Activated CD4-positive, alpha-beta memory T cell treated with anti-CD3 and anti-CD28 coated beads for 36 hours (primary cell): ENCODE measurements at regions of chr15 and their contacts with region 1.

Region 1: GRCh38 chr15:70097337-70098169 is at the start of gene TLE3:
- DNase-seq: peak; percentile 99
- H3K4me3 Mint-ChIP-seq: peak within 1 kb of the TSS; percentile 88
- H3K27ac Mint-ChIP-seq: peak within 1 kb of the TSS; percentile 95
- H3K4me1 Mint-ChIP-seq: peaks cover 33% of the 10 kb centered on the region
- H3K27me3 Mint-ChIP-seq: no peaks in the 10 kb centered on the region
- total RNA-seq, gene TLE3: 85.4 to 95.1 TPM

Region 2: DNA sequence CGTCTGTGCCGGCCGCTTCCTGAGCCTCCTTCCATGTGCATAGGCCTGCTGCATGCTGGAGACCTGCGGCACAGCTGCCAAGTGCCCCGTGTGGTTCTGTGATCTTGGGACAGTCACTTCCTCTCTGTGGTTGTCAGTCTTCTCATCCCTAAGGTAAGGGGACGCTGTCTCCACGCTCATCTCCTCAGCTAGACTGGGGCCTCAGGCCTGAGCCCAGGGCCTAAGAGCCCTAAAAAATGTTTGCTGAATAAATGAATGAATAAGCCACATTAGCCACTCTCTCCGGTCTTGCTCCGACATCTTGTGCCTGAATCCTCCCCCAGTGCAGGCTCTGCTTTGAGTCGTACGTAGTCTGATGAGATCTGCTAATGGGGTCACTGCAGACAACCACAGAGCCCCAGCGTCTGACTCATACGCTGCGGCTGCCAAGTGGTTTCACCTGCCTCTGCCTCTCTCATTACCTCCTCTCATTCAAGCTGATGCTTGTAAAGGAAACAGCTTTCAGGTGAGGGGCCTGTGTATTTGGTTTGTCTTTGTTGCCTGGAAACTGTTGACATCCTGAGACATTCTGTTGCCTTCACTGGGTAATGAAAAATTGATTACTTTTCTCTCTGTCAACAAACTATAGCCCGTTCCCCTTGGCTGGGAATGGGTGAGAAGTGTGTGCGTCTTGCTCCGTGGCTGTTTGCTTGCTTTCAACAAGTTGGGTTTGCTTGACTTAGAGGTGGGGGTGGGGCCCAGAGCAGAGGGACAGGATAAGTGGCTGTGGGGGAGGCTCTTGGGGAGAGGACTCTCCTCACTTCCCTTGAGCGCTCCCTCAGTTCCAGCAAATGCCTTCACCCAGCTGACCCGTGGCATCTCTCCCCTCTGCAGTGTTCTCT is 629.1 kb before region 1 on chr15:
- CTCF ChIA-PET with region 1: interaction called, 4 read pairs
- POLR2A ChIA-PET with region 1: interaction called, 10 read pairs
- intact Hi-C with region 1: loop called (anchors 2 kb)
- DNase-seq: peak; percentile 92
- H3K4me3 Mint-ChIP-seq: peak overlapping the region; percentile 30
- H3K27ac Mint-ChIP-seq: peak overlapping the region; percentile 83
- H3K4me1 Mint-ChIP-seq: peaks cover 38% of the 10 kb centered on the region
- H3K27me3 Mint-ChIP-seq: no peaks in the 10 kb centered on the region

Region 3: GRCh38 chr15:69729161-69729748 is 368.3 kb before region 1 on chr15:
- CTCF ChIA-PET with region 1: interaction called, 3 read pairs
- POLR2A ChIA-PET with region 1: interaction called, 4 read pairs
- intact Hi-C with region 1: loop called (anchors 1 kb)
- DNase-seq: peak; percentile 82
- H3K4me3 Mint-ChIP-seq: peak overlapping the region; percentile 4
- H3K27ac Mint-ChIP-seq: no peak overlapping the region
- H3K4me1 Mint-ChIP-seq: peaks cover 26% of the 10 kb centered on the region
- H3K27me3 Mint-ChIP-seq: peaks cover 4% of the 10 kb centered on the region

Region 4: DNA sequence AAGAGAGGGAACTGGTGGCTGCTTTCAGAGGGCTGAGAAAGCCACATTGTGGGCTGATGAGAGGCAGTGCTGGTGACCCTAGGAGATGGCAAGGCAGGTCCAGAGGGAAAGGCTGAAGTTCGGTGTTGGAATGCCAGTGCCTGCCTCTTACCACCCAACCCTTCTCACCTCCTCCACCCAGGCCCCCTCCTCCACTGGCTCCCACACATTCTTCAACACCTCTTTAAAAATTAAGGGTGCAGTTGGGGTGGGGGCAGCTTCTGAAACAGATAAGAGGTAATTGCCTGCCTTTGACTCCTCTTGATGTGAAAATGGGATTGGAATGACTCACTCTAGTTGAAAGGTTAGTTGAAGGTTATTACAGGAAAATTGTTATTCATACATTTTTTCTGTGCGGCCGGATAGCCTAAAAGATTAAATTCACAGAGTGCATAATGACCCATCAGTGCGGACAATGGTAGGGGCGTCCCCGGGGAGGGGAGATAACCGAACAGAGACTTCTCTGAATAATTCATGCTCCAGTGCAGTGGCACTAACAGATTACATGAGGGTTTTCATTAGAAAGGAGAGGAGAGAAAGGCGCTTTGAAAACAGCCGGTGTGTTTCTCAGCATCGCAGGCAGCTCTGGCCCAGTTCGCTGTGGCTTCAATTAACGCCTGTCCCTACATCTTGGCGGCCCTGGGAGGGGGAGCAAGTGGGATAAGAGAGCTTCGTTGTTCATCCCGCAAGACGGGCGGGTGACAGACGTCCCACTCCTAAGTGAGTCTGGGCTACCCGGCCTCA is 212.2 kb before region 1 on chr15:
- CTCF ChIA-PET with region 1: no interaction called
- POLR2A ChIA-PET with region 1: no interaction called
- intact Hi-C with region 1: no loop called
- DNase-seq: no peak
- H3K4me3 Mint-ChIP-seq: no peak overlapping the region
- H3K27ac Mint-ChIP-seq: no peak overlapping the region
- H3K4me1 Mint-ChIP-seq: peaks cover 7% of the 10 kb centered on the region
- H3K27me3 Mint-ChIP-seq: peaks cover 8% of the 10 kb centered on the region

Region 5: DNA sequence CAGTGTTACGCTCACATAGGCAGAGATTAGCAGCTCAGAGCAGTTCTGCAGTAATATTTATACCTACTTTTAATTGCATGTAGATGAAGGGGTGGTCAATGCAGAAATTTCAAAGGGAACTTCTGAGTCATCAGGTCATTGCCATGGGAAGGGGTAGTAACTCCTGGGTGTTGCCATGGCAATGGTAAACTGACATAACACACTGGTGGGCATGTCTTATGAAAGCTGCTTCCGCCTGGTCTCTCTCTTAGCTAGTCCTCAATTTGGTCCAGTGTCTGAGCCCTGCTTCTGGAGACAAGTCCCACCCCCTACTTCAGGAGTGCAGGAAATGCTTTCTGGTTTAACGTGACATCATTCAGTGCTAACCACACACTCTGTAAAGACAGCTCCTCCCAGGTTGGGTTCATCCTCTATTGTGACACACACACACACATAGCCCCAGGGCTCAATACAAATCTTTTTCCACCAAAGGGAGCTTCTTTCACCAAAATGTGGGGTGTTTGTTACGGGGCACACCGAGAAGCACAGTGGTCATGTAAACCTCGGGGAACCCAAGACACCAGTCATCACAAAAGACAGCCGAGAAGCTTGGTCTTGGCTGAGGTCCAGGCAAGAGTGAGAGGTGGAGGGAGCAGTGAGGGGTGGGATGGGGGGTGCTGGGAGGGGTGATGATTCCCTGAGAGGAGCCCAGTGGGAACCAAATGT is 74.3 kb before region 1 on chr15:
- CTCF ChIA-PET with region 1: no interaction called
- POLR2A ChIA-PET with region 1: interaction called, 3 read pairs
- intact Hi-C with region 1: loop called (anchors 5 kb)
- DNase-seq: peak; percentile 64
- H3K4me3 Mint-ChIP-seq: peak overlapping the region; percentile 24
- H3K27ac Mint-ChIP-seq: peak overlapping the region; percentile 63
- H3K4me1 Mint-ChIP-seq: peaks cover 19% of the 10 kb centered on the region
- H3K27me3 Mint-ChIP-seq: no peaks in the 10 kb centered on the region

Region 6: DNA sequence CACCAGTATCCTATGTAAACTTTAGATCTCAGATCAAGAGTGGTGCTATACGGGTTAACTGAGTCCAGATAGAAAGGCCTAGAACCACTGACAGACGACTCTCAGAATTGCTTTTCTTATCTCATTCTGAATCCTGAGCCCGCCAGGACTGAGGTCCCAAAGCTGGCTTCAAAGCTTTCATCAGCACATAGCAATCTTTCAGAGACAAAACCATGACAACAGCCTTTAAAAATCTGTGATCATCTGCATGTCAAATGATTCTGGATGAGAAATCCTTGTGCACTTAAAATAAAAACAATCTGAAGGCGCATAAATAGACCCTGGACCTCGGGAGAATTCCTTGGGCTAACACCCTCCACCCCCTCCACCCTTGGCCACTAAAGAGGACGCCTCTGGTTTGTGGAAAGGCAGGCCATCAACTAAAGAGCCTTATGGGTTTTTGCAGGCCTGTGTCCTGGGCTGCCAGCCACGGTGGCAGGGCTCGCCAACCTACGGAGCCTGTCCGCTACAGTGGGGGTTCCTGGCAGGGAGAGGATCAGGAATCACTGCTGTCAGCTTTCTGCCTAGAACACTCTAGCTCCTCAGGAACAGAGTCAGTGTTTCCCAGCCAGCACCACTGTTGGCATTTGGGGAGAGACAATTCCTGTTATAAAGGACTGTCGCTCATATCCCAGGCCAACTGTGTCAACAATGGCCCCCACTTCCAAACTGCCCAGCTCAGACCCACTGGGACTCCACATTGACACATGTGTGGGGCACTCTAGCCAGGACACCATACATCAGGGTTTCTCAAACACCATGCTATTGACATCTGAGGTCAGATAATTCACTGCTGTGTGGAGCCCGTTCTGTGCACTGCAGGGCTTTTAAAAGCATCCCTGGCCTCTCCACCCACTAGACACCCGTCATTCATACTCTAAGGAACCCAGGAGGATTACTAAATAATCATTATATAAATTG is 20.1 kb before region 1 on chr15:
- CTCF ChIA-PET with region 1: no interaction called
- POLR2A ChIA-PET with region 1: no interaction called
- intact Hi-C with region 1: no loop called
- DNase-seq: no peak
- H3K4me3 Mint-ChIP-seq: no peak overlapping the region
- H3K27ac Mint-ChIP-seq: no peak overlapping the region
- H3K4me1 Mint-ChIP-seq: peaks cover 23% of the 10 kb centered on the region
- H3K27me3 Mint-ChIP-seq: no peaks in the 10 kb centered on the region

Region 7: DNA sequence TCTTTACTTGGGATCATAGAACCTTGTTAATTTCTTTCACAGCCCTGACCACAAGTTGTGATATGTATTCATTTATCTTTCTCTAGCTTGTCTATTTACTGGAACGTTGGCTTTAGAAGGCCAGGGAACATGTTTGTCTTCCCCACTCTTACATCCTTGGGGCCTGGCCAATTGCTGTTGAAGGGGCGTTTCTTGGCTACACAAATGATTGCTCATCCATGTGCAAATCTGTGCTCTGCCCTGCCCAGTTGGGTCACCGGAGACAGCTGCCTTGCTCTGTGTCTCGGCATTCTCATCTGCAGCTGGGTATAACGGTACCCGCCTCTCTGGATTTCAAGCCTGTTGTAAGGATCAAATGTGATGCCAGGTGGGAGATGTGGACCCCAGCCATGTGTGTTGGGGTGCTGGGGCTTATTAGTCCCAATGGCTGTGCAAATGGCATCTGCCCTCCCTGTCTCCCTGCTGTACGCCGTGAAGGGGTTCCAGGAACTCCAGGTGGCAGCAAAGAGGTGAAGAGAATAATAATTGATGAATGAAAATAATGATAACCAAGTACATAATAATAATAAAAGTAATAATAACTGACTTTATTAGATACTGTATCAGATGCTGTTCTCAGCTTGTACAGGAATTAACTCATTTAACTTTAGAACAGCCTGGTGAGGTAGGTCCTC is 24.2 kb after region 1 on chr15:
- CTCF ChIA-PET with region 1: no interaction called
- POLR2A ChIA-PET with region 1: no interaction called
- intact Hi-C with region 1: no loop called
- DNase-seq: no peak
- H3K4me3 Mint-ChIP-seq: no peak overlapping the region
- H3K27ac Mint-ChIP-seq: no peak overlapping the region
- H3K4me1 Mint-ChIP-seq: peaks cover 3% of the 10 kb centered on the region
- H3K27me3 Mint-ChIP-seq: peaks cover 12% of the 10 kb centered on the region

Region 8: DNA sequence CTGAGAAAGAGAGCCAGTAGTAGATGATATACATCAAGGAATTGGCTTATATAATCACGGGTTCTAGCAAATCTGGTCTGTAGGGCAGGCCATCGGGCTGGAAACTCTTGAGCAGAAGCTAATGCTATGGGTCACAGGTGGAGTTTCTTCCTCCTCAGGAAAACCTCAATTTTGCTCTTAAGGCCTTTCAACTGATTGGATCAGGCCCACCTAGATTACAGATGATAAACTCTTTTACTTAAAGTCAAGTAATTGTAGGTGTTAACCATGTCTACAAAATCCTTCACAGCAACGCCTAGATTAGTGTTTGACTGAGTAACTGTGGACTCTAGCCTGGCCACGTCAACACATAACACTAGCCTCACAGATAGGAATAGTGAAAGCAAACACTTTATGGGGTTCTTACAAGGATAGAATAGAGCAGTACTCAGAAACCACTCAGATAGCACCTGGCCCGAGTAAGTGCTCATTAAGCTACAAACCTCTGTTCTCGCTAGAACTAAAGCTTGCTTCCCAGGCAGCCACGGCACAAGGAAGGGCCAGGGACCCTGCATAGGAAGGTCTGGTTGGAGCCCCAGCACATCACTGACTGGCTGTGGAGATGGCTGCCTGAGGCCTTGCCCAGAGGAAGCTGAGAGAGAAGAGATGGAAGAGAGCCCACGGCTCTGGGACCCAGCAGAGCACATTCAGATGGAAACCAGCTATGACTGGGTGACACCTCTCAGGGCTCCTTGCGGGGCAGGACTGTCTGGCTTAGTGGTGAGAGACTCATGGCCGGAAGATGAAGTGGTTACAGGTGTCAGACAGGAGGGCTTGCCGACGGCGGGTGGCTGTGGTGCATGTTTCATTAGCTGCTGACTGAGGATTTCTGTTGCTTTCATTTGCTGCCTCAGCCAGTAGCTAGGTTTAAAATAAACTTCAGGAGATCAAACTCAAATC is 202.6 kb after region 1 on chr15:
- CTCF ChIA-PET with region 1: interaction called, 3 read pairs
- POLR2A ChIA-PET with region 1: interaction called, 12 read pairs
- intact Hi-C with region 1: no loop called
- DNase-seq: peak; percentile 90
- H3K4me3 Mint-ChIP-seq: no peak overlapping the region
- H3K27ac Mint-ChIP-seq: no peak overlapping the region
- H3K4me1 Mint-ChIP-seq: peaks cover 15% of the 10 kb centered on the region
- H3K27me3 Mint-ChIP-seq: no peaks in the 10 kb centered on the region

Region 9: DNA sequence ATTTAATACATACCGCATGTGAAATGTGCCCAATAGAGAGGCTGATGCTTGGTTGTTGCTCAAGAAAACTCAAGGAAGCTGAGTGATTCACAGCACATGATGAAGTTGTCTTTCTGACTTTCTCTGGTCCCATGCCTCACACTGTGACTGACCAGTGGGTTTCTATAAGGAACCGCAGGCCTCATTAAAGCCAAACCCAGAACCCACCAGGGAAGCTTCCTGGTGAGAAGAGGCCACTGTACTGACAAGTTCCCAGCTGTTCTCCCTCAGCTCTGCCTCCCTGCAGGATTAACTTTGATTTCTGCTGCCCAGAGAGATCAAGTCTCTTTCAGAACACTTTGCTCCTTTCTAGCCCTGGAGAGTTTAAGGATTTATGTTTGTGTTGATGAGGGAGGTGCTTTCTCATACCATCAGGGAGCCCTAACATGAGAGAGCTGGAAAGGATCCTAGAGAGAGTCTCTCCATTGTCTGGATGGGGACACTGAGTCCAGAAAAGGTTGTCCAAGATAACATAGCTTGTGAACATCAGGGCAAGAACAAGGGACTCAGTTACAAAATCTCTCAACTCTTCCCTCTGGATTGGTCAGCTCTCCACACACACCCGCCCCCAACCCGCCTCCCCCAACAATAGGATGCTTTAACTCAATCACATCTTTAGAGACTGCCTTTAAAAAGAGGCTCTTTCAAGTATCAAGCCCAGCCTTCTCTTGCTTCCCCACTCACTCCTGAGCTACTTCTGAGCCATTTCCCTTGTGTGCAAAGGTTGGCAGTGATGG is 303.4 kb after region 1 on chr15:
- CTCF ChIA-PET with region 1: no interaction called
- POLR2A ChIA-PET with region 1: no interaction called
- intact Hi-C with region 1: no loop called
- DNase-seq: no peak
- H3K4me3 Mint-ChIP-seq: no peak overlapping the region
- H3K27ac Mint-ChIP-seq: no peak overlapping the region
- H3K4me1 Mint-ChIP-seq: no peaks in the 10 kb centered on the region
- H3K27me3 Mint-ChIP-seq: peaks cover 9% of the 10 kb centered on the region